ENCODE measurements at regions of chr11 and their contacts with region 1.

Region 1: DNA sequence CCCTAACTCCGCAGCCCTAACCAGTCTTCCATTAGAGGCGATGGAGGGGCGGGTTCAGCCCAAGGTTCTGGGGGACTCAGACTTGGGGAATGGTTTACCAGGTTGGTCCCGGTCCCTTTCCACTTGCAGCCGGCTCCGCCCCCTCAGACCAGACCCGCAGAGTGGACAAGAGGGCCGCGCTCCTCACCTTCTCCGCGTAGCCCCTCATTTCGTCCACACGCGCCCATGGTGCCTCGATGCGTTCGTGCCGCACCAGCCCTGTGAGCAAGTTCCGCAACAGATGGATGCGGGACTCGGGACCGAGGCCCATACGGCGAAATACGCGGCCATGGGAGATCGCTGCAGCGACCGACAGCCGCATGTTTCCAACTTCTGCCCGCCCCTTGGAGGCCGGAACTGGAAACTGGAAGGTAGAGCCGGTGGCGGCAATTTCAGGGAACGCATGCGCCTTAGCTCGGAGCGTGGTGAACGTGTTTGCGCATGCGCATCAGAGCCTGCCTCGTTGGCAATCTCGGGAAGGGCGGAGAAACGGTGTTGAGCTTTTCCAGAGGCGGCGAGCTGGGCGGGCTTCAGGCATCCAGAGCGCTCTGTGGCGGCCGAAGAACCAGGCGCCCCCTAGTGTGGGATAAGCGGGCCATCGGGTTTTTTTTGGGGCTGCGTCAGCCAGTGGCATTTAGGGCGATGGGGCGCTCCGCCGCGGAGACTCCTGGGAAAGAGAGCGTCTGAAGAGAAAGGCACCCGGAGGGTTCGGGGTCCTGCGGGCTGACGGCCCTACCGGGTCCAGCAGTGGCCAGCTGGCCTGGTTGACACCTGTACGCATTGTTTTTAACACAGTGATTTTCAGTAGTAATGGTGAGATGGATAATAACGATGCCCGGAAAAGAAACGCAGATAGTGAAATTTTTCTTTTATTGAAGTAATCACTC is at the start of gene MRPL17:
- DNase-seq: peak; percentile 100
- H3K4me3 ChIP-seq: peak within 1 kb of the TSS; percentile 67 to 92 (median 80)
- H3K27ac ChIP-seq: peak within 1 kb of the TSS; percentile 84 to 95 (median 90)
- H3K4me1 ChIP-seq: peaks cover 0 to 24% (median 21%) of the 10 kb centered on the region in 4 donors
- H3K27me3 ChIP-seq: no peaks in the 10 kb centered on the region
- CTCF ChIP-seq: peak; percentile 81 to 95 (median 84)
- EP300 ChIP-seq: peak in 1 of 4 donors; percentile 65
- POLR2A ChIP-seq: peak; percentile 72 to 84
- total RNA-seq, gene MRPL17: 18.3 to 97.5 (median 20.1) TPM

Region 2: GRCh38 chr11:6234387-6235107 is 448.7 kb before region 1 on chr11 and contains the start of gene FHIP1B:
- intact Hi-C with region 1: loop called (anchors 10 kb)
- DNase-seq: peak; percentile 100
- H3K4me3 ChIP-seq: peak within 1 kb of the TSS; percentile 48 to 90 (median 70)
- H3K27ac ChIP-seq: peak within 1 kb of the TSS; percentile 85 to 91 (median 87)
- H3K4me1 ChIP-seq: peaks cover 0 to 27% (median 15%) of the 10 kb centered on the region in 4 donors
- H3K27me3 ChIP-seq: no peaks in the 10 kb centered on the region
- CTCF ChIP-seq: no peak
- EP300 ChIP-seq: no peak
- POLR2A ChIP-seq: peak; percentile 16 to 47
- total RNA-seq, gene FHIP1B: 21.6 to 66.0 (median 36.6) TPM

Region 3: GRCh38 chr11:6481012-6481923 is 201.9 kb before region 1 on chr11 and contains the starts of genes ARFIP2 and TIMM10B:
- intact Hi-C with region 1: loop called (anchors 2 kb)
- DNase-seq: peak; percentile 99
- H3K4me3 ChIP-seq: peak within 1 kb of the TSS; percentile 67 to 84 (median 79)
- H3K27ac ChIP-seq: peak within 1 kb of the TSS; percentile 88 to 94 (median 91)
- H3K4me1 ChIP-seq: peaks cover 0 to 41% (median 29%) of the 10 kb centered on the region in 4 donors
- H3K27me3 ChIP-seq: no peaks in the 10 kb centered on the region
- CTCF ChIP-seq: no peak
- EP300 ChIP-seq: peak in 1 of 4 donors; percentile 83
- POLR2A ChIP-seq: peak; percentile 90 to 93
- total RNA-seq, gene ARFIP2: 33.9 to 37.2 (median 35.3) TPM
- total RNA-seq, gene TIMM10B: 24.9 to 47.4 (median 44.2) TPM

Region 4: DNA sequence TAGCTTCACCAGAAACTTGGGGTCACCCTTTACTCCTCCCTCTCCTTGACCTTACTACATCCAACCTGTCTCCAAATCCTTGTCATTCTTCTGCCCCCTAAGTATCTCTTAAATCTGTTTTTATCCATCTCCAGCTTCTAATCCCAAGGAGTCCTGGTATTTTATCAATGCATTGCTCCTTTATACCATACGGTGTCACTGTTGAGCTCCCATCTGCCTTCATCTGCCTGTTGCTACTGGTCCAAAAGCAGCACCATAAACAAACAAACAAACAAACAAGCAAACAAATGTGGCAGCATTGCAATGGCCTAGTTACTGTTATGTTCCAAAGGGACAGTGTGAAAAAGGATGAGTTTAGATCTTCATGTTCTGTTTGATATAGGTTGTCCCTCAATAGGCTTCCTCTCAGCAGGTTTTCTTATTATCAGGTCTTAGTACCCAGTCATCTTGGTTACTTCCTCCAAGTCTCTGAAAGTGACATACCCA is 151.9 kb before region 1 on chr11:
- intact Hi-C with region 1: loop called (anchors 1 kb)
- DNase-seq: no peak
- H3K4me3 ChIP-seq: no peak overlapping the region
- H3K27ac ChIP-seq: no peak overlapping the region
- H3K4me1 ChIP-seq: peaks cover 0 to 11% (median 0%) of the 10 kb centered on the region in 4 donors
- H3K27me3 ChIP-seq: no peaks in the 10 kb centered on the region
- CTCF ChIP-seq: peak; percentile 78 to 90 (median 86)
- EP300 ChIP-seq: no peak
- POLR2A ChIP-seq: no peak

Region 5: DNA sequence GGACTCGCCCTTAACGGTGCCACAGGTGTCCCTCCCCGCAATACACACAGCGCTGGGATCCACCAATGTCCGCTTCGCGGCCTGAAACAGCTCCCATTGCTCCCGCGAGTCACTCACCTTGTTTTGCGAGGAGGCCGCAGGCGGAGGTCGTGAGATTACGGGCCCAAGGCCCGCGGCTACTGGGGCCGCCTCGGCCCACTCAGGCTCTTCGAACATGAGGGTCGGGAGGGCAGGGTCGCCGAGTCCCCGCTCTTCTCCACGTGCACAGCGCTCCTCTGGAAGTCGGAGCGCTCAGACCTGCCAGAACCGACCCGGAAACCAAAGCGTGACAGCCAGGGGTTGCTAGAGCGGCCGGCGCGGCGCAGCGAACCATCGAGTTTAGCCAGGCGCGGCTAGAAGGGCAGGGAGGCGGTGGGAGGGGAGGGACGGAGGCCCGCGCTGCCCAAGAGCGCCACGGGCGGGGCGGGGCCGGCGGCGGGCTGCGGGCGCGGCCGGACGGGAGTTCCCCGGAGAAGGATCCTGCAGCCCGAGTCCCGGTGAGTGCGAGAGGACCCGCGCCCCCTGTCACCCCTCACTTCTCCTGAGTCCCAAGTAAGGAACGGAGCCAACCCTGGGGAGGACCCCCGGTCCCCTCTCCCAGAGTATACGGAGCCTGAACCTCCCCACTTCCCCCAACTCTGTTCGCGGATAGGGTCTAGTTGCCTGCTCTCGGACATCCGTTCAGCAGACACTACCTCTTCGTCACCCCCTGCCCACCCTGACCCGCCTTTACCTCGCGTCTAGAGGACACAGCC is 79.7 kb before region 1 on chr11 and contains the starts of genes ILK and RRP8:
- intact Hi-C with region 1: loop called (anchors 5 kb)
- DNase-seq: peak; percentile 96
- H3K4me3 ChIP-seq: peak within 1 kb of the TSS; percentile 76 to 95 (median 84)
- H3K27ac ChIP-seq: peak within 1 kb of the TSS; percentile 98 to 99 (median 98)
- H3K4me1 ChIP-seq: peaks cover 0 to 81% (median 63%) of the 10 kb centered on the region in 4 donors
- H3K27me3 ChIP-seq: no peaks in the 10 kb centered on the region
- CTCF ChIP-seq: no peak
- EP300 ChIP-seq: no peak
- POLR2A ChIP-seq: peak; percentile 73 to 86
- total RNA-seq, gene ILK: 450 to 607 (median 548) TPM
- total RNA-seq, gene RRP8: 20.7 to 23.2 (median 21.7) TPM

Region 6: GRCh38 chr11:6619004-6619745 is 64.0 kb before region 1 on chr11 and contains the start of gene TPP1:
- intact Hi-C with region 1: loop called (anchors 5 kb)
- DNase-seq: peak; percentile 98
- H3K4me3 ChIP-seq: peak within 1 kb of the TSS; percentile 58 to 81 (median 68)
- H3K27ac ChIP-seq: peak within 1 kb of the TSS; percentile 85 to 98 (median 86)
- H3K4me1 ChIP-seq: peaks cover 0 to 24% (median 22%) of the 10 kb centered on the region in 4 donors
- H3K27me3 ChIP-seq: no peaks in the 10 kb centered on the region
- CTCF ChIP-seq: no peak
- EP300 ChIP-seq: peak in 1 of 4 donors; percentile 51
- POLR2A ChIP-seq: peak; percentile 84 to 86
- total RNA-seq, gene TPP1: 39.8 to 58.8 (median 45.9) TPM

Measured in sigmoid colon (tissue), 7 donors.